HEK293 (cell line): ENCODE measurements at regions of chr2 and their contacts with region 1.

Region 1: GRCh38 chr2:105344704-105345345 is 7.5 kb downstream of the C2orf49 start:
- H3K4me3 ChIP-seq: no peak overlapping the region
- H3K27ac ChIP-seq: peak overlapping the region; percentile 21
- H3K4me1 ChIP-seq: no peaks in the 10 kb centered on the region
- CTCF ChIP-seq: no peak

Region 2: DNA sequence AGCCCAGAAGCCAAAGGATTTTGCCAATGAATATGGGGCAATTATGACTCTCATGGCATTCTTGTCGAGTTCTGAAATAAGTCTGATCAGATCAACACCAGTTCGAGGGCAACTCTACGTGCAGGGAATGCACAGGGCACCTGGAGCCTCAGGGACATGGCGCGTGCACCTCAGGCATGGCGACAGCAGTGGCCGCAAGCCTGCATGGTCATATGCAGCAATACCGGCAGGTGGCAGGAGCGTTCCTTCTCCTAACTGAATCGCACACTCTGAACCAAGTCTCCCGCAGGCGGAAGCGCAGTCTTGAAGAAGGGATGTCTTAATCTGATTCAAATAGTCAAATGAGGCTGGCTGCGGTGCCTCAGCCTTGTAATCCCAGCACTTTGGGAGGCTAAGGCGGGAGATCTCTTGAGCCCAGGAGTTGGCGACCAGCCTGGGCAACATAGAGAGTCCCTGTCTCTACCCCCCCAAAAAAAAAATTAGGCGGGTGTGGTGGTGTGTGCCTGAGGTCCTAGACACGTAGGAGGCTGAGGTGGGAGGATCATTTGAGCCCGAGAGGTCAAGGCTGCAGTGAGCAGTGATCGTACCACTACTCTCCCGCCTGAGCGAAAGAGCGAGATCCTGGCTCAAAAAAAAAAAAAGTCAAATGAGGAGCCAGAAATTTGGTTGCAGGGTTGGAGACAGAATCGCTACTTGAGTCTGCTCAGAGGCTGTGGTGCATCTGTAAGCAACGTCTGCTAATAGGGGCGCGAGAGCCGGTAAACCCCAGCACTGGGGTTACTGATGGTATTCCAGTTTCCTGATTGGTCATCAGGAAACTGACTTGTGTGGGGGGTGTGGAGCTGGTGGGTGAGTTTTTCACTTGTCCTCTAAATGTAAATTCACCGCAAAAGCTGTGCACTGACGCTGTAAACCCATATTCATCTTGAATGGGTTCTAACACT is 25.2 kb after region 1 on chr2:
- CTCF ChIA-PET with region 1: interaction called, 11 read pairs
- POLR2A ChIA-PET with region 1: no interaction called
- H3K4me3 ChIP-seq: no peak overlapping the region
- H3K27ac ChIP-seq: no peak overlapping the region
- H3K4me1 ChIP-seq: no peaks in the 10 kb centered on the region
- CTCF ChIP-seq: peak; percentile 88

Region 3: DNA sequence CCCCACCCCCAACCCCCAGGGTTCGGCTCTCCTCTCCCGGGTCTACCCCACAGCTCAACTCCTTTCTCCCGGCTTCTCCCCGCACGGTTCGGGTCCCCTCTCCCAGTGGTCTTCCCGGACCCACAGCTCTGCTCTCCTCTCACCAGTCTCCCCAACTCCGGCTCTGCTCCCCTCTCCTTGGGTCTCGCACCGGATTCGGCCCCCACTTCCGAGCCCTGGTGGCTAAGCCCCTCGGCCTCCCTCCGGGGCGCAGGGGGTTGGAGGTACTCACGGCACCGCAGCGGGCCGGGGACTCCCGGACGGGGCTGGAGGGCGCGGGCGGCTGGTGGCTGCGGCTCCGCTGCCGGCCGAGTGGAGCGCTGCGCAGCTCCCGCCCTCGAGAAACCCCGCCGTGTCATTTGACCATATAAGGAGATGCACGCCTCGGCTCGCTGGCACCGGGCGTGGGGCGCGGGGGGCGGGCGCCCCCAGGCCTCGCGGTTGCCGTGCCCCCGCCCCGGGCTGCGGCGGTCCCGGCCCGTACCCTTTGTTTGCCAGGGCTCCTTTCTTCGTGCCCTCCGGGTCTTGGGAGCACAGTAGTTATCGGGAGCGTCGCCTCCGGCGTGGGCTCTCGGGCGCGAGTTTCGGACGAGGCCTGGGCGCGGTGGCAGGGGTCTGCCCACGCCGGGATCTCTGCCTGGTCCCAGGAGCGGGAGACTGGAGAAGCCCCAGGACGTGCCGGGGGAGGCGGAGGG is 54.0 kb after region 1 on chr2 and contains the start of gene FHL2:
- CTCF ChIA-PET with region 1: interaction called, 7 read pairs
- POLR2A ChIA-PET with region 1: interaction called, 12 read pairs
- H3K4me3 ChIP-seq: peak within 1 kb of the TSS; percentile 74
- H3K27ac ChIP-seq: peak within 1 kb of the TSS; percentile 56; the same call in 1 of the 2 replicates
- H3K4me1 ChIP-seq: peaks cover 7% of the 10 kb centered on the region; the same call in 1 of the 2 replicates
- CTCF ChIP-seq: 0 out of 2 replicates have a peak, but pooled peaks have one; percentile 49